ENCODE measurements at regions of chr18 and their contacts with region 1.

Region 1: DNA sequence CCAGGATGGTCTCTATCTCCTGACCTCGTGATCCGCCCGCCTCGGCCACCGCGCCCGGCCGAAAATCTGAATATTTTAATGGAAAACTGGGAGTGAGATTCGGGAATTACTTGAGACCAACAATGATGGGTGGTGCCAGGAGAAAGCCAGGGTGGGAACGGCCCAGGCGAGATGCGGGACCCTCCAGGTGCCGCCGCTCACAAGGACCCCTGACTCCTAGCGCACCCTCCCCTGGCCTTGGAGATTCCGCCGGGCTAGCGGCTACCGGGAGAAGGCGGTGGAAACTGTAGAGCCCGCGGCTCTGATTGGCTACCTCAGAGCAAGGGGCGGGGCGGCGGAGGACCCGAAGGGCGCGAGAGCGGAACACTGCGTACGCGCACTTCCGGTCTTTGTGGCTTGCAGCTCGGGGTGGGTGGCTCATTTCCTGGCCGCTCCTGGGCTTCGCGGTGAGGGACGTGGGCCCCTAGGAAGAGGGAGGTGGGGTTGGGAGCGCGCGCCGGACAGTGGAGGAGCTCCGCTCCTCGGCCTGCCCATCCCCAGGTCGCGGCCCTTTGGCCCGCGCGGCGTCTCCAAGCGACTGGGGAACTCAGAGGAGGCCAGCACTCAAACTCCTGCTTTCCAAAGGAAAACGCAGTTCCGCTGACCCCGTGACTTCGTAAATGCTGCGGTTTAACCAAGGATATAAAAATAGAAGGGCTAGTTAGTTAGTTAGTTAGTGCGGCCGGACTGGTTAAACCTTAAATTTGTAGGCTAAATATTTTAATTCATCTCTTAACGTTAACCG is at the start of gene ZNF397:
- DNase-seq: peak; percentile 99
- H3K4me3 Mint-ChIP-seq: peak within 1 kb of the TSS; percentile 96
- H3K27ac Mint-ChIP-seq: peak within 1 kb of the TSS; percentile 98
- H3K4me1 Mint-ChIP-seq: peaks cover 12% of the 10 kb centered on the region
- H3K27me3 Mint-ChIP-seq: no peaks in the 10 kb centered on the region
- total RNA-seq, gene ZNF397: 19.2 and 22.6 TPM in 2 replicates

Region 2: GRCh38 chr18:34976899-34977837 is 263.7 kb before region 1 on chr18:
- intact Hi-C with region 1: loop called (anchors 1 kb)
- DNase-seq: peak; percentile 90
- H3K4me3 Mint-ChIP-seq: peak overlapping the region; percentile 82
- H3K27ac Mint-ChIP-seq: no peak overlapping the region
- H3K4me1 Mint-ChIP-seq: peaks cover 23% of the 10 kb centered on the region
- H3K27me3 Mint-ChIP-seq: peaks cover 39% of the 10 kb centered on the region

Region 3: DNA sequence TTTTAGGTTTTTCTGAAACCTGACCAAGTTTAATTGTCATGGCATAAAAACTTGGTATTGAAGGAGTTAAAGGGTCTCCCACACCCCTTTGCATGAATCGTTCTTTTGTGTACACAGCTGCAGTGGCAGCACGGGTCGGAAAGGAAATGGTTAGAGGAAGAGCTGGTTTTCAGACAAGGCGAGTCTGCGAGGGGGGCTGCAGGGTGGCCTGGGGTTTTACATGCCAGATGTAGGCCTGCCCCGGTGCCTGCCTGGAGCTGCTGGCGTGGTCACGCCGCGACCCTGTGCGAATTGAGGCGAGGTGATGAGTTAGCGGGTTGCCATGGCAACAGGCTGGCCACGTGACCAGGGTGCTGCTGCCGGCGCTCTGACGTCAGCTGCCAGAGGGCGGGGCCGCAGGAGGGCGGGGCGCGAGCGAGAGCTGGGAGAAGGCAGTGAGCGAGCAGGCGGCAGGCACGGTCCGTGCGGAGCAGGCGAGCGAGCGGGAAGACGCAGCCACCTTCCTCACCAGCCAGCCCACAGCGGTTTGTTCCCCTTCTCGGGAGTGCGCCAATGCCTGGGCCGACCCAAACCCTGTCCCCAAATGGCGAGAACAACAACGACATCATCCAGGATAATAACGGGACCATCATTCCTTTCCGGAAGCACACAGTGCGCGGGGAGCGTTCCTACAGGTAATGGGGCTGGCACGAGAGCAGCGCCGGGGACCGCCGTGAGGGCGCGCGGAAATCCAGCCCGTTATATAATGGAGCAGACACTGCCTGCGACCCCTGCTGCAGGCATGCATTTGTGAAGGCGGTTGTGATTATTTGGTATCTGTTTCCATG is 199.7 kb before region 1 on chr18 and contains the start of gene MAPRE2:
- intact Hi-C with region 1: loop called (anchors 2 kb)
- DNase-seq: peak; percentile 100
- H3K4me3 Mint-ChIP-seq: peak within 1 kb of the TSS; percentile 98
- H3K27ac Mint-ChIP-seq: peak within 1 kb of the TSS; percentile 98
- H3K4me1 Mint-ChIP-seq: peaks cover 54% of the 10 kb centered on the region
- H3K27me3 Mint-ChIP-seq: no peaks in the 10 kb centered on the region
- total RNA-seq, gene MAPRE2: 46.8 and 52.5 TPM in 2 replicates

Region 4: GRCh38 chr18:35290073-35290735 is 49.3 kb after region 1 on chr18 and contains the start of gene ZSCAN30:
- intact Hi-C with region 1: loop called (anchors 1 kb)
- DNase-seq: peak; percentile 99
- H3K4me3 Mint-ChIP-seq: peak within 1 kb of the TSS; percentile 100
- H3K27ac Mint-ChIP-seq: peak within 1 kb of the TSS; percentile 95
- H3K4me1 Mint-ChIP-seq: peaks cover 37% of the 10 kb centered on the region
- H3K27me3 Mint-ChIP-seq: no peaks in the 10 kb centered on the region
- total RNA-seq, gene ZSCAN30: 11.6 and 12.2 TPM in 2 replicates

Region 5: DNA sequence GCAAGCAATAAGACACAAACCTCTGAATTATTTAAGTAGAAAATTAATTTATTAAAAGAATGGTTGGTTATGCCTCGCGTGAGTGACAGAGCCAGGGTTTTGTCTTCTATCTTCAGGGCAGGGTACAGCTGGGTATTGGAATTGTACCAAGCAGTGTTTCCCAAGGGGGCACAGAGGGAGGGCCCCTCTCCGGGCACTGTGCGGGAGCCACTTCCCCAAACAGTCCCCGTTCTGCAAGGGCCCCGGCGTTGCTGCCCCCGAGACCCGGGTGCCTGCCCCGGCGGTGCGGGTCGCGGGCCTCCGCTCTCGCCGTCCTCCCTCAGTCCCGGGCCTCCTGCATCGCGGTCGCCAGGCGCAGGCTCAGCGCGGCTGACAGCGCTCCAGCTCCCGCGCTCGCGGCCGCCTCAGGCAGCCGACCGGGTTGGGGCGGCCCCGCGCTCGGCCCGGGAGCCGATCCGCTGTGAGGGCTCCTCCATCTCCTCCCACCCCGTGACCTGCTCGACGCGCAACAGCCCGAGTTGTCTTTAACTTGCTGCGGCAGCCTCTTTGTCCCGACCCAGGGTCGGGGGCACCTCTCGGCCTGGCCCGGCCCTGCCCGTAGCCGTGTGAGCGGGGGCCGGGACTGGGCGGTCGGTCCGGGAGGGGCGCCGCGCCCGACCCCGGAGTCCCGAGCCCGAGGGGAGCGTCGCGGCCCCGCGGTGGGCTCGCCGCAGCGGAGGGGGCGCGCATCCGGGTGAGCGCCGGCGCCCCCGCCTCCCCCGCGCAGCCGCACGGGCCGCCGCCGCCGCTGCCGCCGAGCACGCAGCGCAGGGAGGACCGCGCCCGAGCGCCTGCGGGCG is 340.1 kb after region 1 on chr18:
- intact Hi-C with region 1: loop called (anchors 5 kb)
- DNase-seq: peak; percentile 86
- H3K4me3 Mint-ChIP-seq: peak overlapping the region; percentile 73
- H3K27ac Mint-ChIP-seq: peak overlapping the region; percentile 66
- H3K4me1 Mint-ChIP-seq: peaks cover 22% of the 10 kb centered on the region
- H3K27me3 Mint-ChIP-seq: peaks cover 12% of the 10 kb centered on the region